ENCODE measurements at regions of chr15 and their contacts with region 1.

Region 1: GRCh38 chr15:40847205-40847961 is 3.5 kb downstream of the SPINT1 start:
- DNase-seq: peak; percentile 65
- H3K4me3 ChIP-seq: peak overlapping the region in 2 of 3 experiments; percentile 5 to 94
- H3K27ac ChIP-seq: peak overlapping the region; percentile 85
- H3K4me1 ChIP-seq: peaks cover 34% of the 10 kb centered on the region
- H3K27me3 ChIP-seq: no peaks in the 10 kb centered on the region
- CTCF ChIP-seq: no peak

Region 2: DNA sequence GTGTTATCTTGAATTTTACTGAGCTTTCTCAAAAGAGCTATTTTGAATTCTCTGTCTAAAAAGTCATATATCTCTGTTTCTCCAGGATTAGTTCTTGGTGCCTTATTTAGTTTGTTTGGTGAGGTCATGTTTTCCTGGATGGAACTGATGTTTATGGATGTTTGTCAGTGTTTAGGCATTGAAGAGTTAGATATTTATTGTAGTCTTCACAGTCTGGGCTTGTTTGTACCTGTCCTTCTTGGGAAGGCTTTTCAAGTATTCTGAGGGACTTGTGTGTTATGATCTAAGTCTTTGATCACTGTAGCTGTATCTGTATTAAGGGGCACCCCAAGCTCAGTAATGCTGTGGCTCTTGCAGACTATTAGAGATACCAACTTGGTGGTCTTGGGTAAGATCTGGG is 163.0 kb before region 1 on chr15:
- CTCF ChIA-PET with region 1: no interaction called
- dilution Hi-C with region 1: no loop called
- in situ Hi-C with region 1: no loop called
- intact Hi-C with region 1: loop called (anchors 2 kb)
- DNase-seq: peak; percentile 32
- H3K4me3 ChIP-seq: no peak overlapping the region
- H3K27ac ChIP-seq: no peak overlapping the region
- H3K4me1 ChIP-seq: peaks cover 8% of the 10 kb centered on the region
- H3K27me3 ChIP-seq: no peaks in the 10 kb centered on the region
- CTCF ChIP-seq: no peak

Region 3: DNA sequence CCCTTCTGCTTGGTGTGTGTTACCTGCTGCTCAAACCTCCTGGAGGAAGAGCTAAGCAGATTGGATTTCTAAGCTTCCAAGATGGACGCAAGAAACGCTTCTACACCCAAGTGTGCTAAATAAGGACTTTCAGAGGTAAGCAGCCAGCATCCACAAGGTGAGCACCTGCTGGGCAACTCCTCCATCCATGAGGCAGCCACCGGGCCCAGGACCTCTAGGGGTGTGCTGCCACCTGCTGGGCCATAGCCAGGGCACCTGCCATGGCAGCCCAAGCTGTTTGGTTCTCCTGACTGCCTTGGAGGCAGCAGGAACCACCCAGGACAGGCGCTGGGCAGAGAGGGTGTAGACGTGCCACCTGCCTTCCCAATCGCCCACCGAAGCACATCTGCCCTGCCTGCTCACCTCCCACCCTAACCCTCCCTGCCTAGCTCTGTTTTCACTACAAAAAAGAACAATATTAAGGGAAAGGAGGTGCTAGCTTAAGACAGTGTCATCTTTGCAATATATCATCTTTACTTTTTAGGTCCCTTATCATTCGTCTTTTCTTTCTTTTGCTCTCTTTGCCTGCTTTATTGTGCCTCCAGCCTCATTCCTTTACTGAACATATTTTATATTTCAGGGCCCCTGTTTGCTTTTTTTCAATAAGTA is 64.7 kb before region 1 on chr15:
- CTCF ChIA-PET with region 1: interaction called, 8 read pairs
- dilution Hi-C with region 1: no loop called
- in situ Hi-C with region 1: no loop called
- intact Hi-C with region 1: loop called (anchors 2 kb)
- DNase-seq: peak; percentile 67
- H3K4me3 ChIP-seq: no peak overlapping the region
- H3K27ac ChIP-seq: no peak overlapping the region
- H3K4me1 ChIP-seq: peaks cover 25% of the 10 kb centered on the region
- H3K27me3 ChIP-seq: no peaks in the 10 kb centered on the region
- CTCF ChIP-seq: peak; percentile 83 to 93

Region 4: DNA sequence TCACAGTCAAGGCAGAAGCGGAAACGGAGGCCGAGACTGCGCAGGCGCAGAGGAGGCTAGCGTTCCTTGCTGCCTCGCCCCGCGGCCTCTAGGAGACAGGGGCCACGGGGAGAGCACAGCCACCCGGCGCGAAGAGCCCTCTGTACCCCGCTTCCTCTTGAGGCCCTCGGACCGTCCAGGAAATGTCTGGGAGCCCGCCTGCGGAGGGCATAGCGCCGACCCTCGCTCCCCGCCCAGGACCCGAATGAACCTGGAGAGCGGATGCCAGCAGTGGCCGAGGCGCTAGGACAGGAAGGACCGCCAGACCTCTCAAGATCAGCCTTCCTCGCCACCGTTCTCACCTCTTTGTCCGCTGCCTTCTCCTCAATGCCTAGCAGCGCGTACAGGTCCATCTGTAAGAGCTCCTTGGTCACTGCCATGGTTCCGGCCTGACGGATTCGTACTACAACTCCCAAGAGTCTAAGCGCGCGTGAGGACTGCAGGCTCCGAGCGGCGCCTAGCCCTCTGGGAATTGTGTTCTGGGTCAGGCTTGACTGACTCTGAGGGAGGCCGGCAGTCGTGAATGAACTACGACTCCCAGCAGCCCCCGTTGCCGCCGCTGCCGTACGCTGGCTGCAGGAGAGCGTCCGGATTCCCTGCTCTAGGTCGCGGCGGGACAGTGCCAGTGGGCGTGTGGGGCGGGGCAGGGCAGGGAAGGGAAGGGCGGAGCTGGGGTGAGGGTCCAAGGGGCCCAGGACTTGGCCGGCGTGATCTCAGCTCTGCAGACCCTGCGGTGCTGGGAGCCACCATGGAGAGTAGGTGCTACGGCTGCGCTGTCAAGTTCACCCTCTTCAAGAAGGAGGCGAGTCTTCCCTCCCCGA is 40.1 kb before region 1 on chr15 and contains the starts of genes DNAJC17 and ZFYVE19:
- CTCF ChIA-PET with region 1: no interaction called
- dilution Hi-C with region 1: no loop called
- in situ Hi-C with region 1: no loop called
- intact Hi-C with region 1: loop called (anchors 1 kb)
- DNase-seq: peak; percentile 97
- H3K4me3 ChIP-seq: peak within 1 kb of the TSS; percentile 72 to 92 (median 83)
- H3K27ac ChIP-seq: peak within 1 kb of the TSS; percentile 56
- H3K4me1 ChIP-seq: peaks cover 16% of the 10 kb centered on the region
- H3K27me3 ChIP-seq: no peaks in the 10 kb centered on the region
- CTCF ChIP-seq: peak in 1 of 2 donors; percentile 17
- total RNA-seq, gene DNAJC17: 12.0 to 40.9 TPM
- total RNA-seq, gene ZFYVE19: 20.2 to 21.2 TPM

Region 5: DNA sequence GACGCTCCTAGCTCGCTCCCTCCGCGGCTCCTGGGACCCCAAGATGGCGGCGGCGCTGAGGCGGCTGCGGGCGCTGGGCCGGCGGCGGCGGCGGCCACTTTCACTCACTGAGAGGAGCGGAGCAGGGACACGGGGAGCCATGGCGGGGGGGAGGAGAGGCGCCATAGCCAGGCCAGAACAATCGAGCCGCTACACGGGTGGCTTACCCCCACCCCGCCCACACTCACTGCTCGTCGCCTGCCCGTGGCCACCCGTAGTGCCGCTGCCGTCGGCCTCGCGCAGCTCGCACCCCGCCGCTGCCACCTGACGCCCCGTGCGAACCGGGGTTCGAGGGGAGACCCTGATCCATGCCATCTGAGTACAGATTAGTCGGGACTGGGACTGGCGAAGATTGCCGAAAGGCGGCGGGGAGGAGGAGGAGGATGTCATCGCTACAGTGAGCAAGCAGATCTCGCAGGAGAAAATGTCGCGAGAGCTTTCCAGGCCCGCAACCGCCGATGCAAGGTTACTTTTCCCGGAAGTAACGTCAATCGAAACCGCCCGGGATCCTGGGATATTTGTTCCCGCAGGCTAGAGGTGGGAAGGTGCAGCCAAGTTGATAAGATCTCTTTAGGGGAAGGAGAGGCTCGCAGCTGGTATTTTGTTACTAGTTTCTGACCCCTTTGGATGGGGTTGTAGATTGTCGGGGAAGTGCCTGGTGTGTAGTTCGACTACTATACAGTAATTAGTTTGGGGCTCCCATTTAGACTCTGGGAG is 268.9 kb after region 1 on chr15 and contains the start of gene INO80:
- CTCF ChIA-PET with region 1: no interaction called
- dilution Hi-C with region 1: no loop called
- in situ Hi-C with region 1: no loop called
- intact Hi-C with region 1: loop called (anchors 2 kb)
- DNase-seq: peak; percentile 98
- H3K4me3 ChIP-seq: peak within 1 kb of the TSS; percentile 84 to 92 (median 89)
- H3K27ac ChIP-seq: peak within 1 kb of the TSS; percentile 100
- H3K4me1 ChIP-seq: peaks cover 9% of the 10 kb centered on the region
- H3K27me3 ChIP-seq: no peaks in the 10 kb centered on the region
- CTCF ChIP-seq: no peak
- total RNA-seq, gene INO80: 14.0 to 28.0 TPM